Common myeloid progenitor, CD34-positive (primary cell): ENCODE measurements at regions of chr1 and their contacts with region 1.

Region 1: GRCh38 chr1:205061665-205062069 is 18.7 kb downstream of the CNTN2 start:
- DNase-seq: peak; percentile 78 to 90 (median 88)
- H3K4me3 ChIP-seq: no peak overlapping the region
- H3K27ac ChIP-seq: no peak overlapping the region
- H3K4me1 ChIP-seq: peaks cover 0 to 7% (median 4%) of the 10 kb centered on the region in 4 experiments
- H3K27me3 ChIP-seq: peaks cover 0 to 1% (median 0%) of the 10 kb centered on the region in 5 experiments

Region 2: GRCh38 chr1:204828338-204828850 is 233.3 kb before region 1 on chr1:
- CTCF ChIA-PET with region 1: no interaction called
- POLR2A ChIA-PET with region 1: no interaction called
- DNase-seq: peak; percentile 22 to 61 (median 57)
- H3K4me3 ChIP-seq: peak overlapping the region in 3 of 7 experiments; percentile 45 to 51 (median 47)
- H3K27ac ChIP-seq: no peak overlapping the region
- H3K4me1 ChIP-seq: peaks cover 0 to 8% (median 3%) of the 10 kb centered on the region in 4 experiments
- H3K27me3 ChIP-seq: peaks cover 12 to 82% (median 35%) of the 10 kb centered on the region in 5 experiments

Region 3: DNA sequence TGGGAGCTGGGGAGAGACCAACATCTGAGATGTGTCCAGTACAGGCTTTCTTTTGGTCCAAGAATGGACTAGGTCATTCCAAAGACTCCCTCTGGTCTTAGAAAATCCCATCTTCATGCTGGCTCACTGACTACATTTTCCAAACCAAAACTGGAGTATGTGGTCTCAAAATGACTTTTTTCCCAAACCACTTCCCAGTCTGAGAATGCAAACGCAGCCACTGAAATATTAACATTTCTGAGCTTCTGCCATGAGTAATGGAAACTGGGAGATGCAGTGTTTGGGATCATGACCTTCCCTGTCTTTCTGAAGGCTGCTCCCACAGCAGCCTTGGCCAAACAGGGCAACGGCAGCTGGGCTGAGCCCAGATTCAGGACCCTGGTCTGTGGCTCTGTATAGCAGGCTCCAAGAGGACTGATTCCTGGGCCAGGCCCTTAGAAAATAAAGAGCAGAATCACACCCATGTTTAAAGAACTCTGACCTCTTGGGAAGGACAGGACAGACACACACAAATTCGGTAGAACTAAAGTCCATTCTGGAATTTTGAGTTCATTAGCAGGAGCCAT is 80.7 kb before region 1 on chr1:
- CTCF ChIA-PET with region 1: interaction called, 149 read pairs
- POLR2A ChIA-PET with region 1: interaction called, 5 read pairs
- DNase-seq: no peak
- H3K4me3 ChIP-seq: no peak overlapping the region
- H3K27ac ChIP-seq: no peak overlapping the region
- H3K4me1 ChIP-seq: peaks cover 6 to 71% (median 60%) of the 10 kb centered on the region in 4 experiments
- H3K27me3 ChIP-seq: no peaks in the 10 kb centered on the region

Region 4: GRCh38 chr1:204997591-204998355 is 63.9 kb before region 1 on chr1:
- CTCF ChIA-PET with region 1: interaction called, 166 read pairs
- POLR2A ChIA-PET with region 1: interaction called, 3 read pairs
- DNase-seq: no peak
- H3K4me3 ChIP-seq: no peak overlapping the region
- H3K27ac ChIP-seq: no peak overlapping the region
- H3K4me1 ChIP-seq: peaks cover 3 to 13% (median 4%) of the 10 kb centered on the region in 4 experiments
- H3K27me3 ChIP-seq: no peaks in the 10 kb centered on the region

Region 5: DNA sequence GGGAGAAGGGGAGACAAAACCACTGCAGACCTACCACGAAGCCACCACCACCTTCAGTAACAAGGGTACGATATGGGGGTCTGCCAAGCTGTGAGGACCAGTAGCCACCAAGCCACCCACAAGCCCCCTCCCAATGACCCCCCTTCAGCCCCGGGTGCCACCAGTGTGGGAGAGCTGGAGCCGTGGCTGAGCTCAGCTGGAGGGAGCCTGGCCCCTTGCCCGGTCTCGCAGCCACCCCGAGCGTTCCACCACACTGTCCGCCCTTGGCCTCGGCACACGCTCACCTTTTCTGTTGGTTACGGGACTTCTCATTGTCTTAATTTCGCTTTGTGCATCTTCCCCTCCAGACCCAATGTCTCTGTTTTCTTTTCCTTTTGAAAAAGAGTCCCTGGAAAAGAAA is 45.1 kb before region 1 on chr1:
- CTCF ChIA-PET with region 1: interaction called, 16 read pairs
- POLR2A ChIA-PET with region 1: no interaction called
- DNase-seq: no peak
- H3K4me3 ChIP-seq: no peak overlapping the region
- H3K27ac ChIP-seq: no peak overlapping the region
- H3K4me1 ChIP-seq: peaks cover 0 to 15% (median 7%) of the 10 kb centered on the region in 4 experiments
- H3K27me3 ChIP-seq: no peaks in the 10 kb centered on the region

Region 6: DNA sequence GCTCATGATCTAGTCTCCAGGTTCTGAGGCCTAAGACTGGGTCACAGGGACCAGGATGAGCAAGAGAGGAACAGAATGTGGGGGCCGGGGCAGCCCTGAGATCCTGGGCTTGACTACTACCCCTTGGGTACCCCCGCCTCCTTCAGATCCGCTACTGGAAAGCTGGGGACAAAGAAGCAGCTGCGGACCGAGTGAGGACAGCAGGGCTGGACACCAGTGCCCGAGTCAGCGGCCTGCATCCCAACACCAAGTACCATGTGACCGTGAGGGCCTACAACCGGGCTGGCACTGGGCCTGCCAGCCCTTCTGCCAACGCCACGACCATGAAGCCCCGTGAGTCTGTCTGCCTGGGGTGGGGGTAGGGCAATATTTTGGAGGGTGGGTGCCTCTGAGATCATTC is 10.1 kb after region 1 on chr1:
- CTCF ChIA-PET with region 1: interaction called, 19 read pairs
- POLR2A ChIA-PET with region 1: no interaction called
- DNase-seq: no peak
- H3K4me3 ChIP-seq: no peak overlapping the region
- H3K27ac ChIP-seq: no peak overlapping the region
- H3K4me1 ChIP-seq: no peaks in the 10 kb centered on the region
- H3K27me3 ChIP-seq: no peaks in the 10 kb centered on the region

Region 7: GRCh38 chr1:205127646-205128045 is 66.0 kb after region 1 on chr1:
- CTCF ChIA-PET with region 1: no interaction called
- POLR2A ChIA-PET with region 1: no interaction called
- DNase-seq: no peak
- H3K4me3 ChIP-seq: no peak overlapping the region
- H3K27ac ChIP-seq: no peak overlapping the region
- H3K4me1 ChIP-seq: peaks cover under 1 to 5% (median 4%) of the 10 kb centered on the region in 4 experiments
- H3K27me3 ChIP-seq: no peaks in the 10 kb centered on the region

Region 8: DNA sequence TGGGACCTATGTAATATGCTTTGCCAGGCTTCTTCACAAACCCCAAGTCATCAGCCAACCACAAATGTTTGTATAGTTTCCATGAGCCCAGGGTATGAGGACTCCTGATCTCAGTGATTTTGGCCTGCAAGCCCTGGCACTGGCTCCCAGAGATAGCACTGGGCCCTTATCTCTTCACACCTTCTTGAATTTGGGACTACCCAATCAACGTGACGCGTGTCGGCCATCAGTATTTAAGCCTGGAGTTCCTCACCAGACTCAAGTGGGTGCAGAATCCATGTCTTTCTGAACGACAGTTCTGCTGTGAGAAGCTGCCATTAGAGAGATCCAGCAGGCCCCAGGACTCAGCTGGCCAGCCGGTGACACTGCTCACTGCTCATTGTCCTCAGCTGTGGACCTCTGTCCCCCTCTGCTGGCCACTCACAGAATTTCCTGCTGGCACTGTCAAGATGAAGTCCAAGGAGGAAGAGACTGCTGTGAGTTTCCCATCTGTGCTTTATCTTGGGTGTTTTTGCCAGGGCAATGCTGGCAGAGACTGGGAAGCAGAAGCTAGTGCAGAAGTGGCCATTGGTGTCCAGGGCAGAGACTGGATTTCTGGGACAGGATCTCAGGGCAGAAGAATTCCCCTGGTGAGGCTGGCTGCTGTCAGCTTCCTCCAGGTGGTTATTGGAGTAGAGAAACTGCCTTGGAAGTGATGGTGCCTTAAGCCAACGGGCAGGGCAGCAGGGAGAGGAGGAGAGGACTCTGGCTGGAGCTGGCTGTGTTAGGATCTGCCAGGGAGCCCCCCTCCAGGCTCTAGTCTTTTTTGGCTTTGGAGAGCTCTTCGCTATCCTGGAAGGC is 194.5 kb after region 1 on chr1:
- CTCF ChIA-PET with region 1: interaction called, 11 read pairs
- POLR2A ChIA-PET with region 1: no interaction called
- DNase-seq: peak; percentile 83 to 94 (median 93)
- H3K4me3 ChIP-seq: no peak overlapping the region
- H3K27ac ChIP-seq: peak overlapping the region in 1 of 2 experiments; percentile 46
- H3K4me1 ChIP-seq: peaks cover 0 to 19% (median 3%) of the 10 kb centered on the region in 4 experiments
- H3K27me3 ChIP-seq: peaks cover 0 to 12% (median 4%) of the 10 kb centered on the region in 5 experiments